Activated CD4-positive, alpha-beta T cell treated with anti-CD3 and anti-CD28 coated beads, Interleukin-2, amount 10 ng/mL, durations not matched to agents 24 days and 14 days (primary cell): ENCODE measurements at regions of chr10 and their contacts with region 1.

Region 1: DNA sequence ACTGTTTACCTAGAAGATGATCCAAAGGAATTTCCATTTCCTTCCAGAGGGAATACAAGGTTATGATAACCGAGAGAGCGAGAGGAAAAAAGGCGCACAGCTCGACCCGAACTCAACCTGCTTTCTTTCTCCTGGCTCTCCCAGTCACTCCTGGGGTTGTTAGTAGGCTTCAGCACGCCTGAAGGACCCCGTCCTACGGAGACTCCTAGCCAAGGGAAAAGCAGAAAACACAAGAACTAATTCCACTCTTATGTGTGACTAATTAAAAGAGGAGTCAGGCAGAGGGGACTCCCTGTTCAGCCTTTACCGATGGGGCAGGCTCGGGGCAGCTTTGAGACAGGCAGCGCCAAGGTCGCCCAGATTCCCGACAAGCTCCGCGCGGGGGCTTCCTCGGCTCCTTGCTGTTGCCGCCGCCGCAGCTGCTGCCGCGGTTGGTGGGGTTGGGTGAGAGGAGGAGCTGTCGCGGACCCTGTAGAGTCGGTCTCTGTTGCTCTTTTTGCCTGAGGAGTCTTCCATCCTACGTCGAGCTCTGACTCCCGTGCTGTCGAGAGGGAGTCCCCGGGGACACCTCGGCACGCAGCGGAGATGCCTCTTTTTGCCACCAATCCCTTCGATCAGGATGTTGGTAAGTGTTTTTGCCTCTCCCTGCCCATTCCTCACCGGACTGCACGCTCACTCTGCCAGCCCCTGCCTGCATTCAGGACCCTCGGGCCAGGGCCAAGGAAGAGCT is at the start of gene STAM:
- DNase-seq: peak; percentile 97
- H3K4me3 Mint-ChIP-seq: peak within 1 kb of the TSS; percentile 96
- H3K27ac Mint-ChIP-seq: peak within 1 kb of the TSS; percentile 100
- H3K4me1 Mint-ChIP-seq: peaks cover 44% of the 10 kb centered on the region
- H3K27me3 Mint-ChIP-seq: no peaks in the 10 kb centered on the region
- total RNA-seq, gene STAM: 22.2 and 25.0 TPM in 2 replicates

Region 2: GRCh38 chr10:17029581-17030271 is 614.2 kb before region 1 on chr10:
- intact Hi-C with region 1: loop called (anchors 5 kb)
- DNase-seq: peak; percentile 92
- H3K4me3 Mint-ChIP-seq: peak overlapping the region; percentile 80
- H3K27ac Mint-ChIP-seq: peak overlapping the region; percentile 90
- H3K4me1 Mint-ChIP-seq: peaks cover 63% of the 10 kb centered on the region
- H3K27me3 Mint-ChIP-seq: peaks cover 2% of the 10 kb centered on the region

Region 3: GRCh38 chr10:17617031-17617911 is 26.6 kb before region 1 on chr10 and contains the start of gene HACD1:
- intact Hi-C with region 1: loop called (anchors 1 kb)
- DNase-seq: peak; percentile 85
- H3K4me3 Mint-ChIP-seq: peak within 1 kb of the TSS; percentile 88
- H3K27ac Mint-ChIP-seq: peak within 1 kb of the TSS; percentile 48
- H3K4me1 Mint-ChIP-seq: peaks cover 6% of the 10 kb centered on the region
- H3K27me3 Mint-ChIP-seq: peaks cover 29% of the 10 kb centered on the region
- total RNA-seq, gene HACD1: 1.1 and 1.2 TPM in 2 replicates

Region 4: DNA sequence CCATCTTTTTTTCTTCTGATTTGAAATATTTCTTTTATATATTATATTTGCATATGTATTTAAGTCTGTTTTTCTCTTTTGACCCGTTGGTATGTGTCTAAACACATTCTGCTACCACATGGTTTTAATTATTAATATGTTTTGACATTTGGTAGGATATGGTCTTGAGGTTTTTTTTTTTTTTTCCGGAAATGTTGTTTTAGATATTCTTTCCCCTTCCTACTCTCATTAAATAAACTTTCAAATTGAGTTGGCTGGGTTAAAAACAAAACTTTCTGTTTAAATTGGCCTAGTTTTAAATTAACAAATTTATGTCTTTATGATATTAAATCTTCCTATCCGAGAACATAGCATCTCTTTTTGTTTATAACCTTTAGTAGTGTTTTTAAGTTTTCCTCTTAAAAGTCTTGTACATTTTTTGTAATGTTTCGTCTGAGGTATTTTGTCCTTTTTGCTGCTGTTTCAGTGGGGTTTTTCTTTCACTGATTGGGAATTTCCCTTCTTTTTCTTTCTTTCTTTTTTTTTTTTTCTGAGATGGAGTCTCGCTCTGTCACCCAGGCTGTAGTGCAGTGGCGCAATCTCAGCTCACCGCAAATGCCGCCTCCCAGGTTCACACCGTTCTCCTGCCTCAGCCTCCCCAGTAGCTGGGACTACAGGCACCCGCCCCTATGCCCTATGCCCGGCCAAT is 25.4 kb after region 1 on chr10:
- intact Hi-C with region 1: loop called (anchors 1 kb)
- DNase-seq: no peak
- H3K4me3 Mint-ChIP-seq: peak overlapping the region; percentile 70
- H3K27ac Mint-ChIP-seq: peak overlapping the region; percentile 86
- H3K4me1 Mint-ChIP-seq: peaks cover 38% of the 10 kb centered on the region
- H3K27me3 Mint-ChIP-seq: no peaks in the 10 kb centered on the region

Region 5: GRCh38 chr10:17703706-17704105 is 59.8 kb after region 1 on chr10:
- intact Hi-C with region 1: loop called (anchors 5 kb)
- DNase-seq: no peak
- H3K4me3 Mint-ChIP-seq: no peak overlapping the region
- H3K27ac Mint-ChIP-seq: no peak overlapping the region
- H3K4me1 Mint-ChIP-seq: no peaks in the 10 kb centered on the region
- H3K27me3 Mint-ChIP-seq: no peaks in the 10 kb centered on the region

Region 6: DNA sequence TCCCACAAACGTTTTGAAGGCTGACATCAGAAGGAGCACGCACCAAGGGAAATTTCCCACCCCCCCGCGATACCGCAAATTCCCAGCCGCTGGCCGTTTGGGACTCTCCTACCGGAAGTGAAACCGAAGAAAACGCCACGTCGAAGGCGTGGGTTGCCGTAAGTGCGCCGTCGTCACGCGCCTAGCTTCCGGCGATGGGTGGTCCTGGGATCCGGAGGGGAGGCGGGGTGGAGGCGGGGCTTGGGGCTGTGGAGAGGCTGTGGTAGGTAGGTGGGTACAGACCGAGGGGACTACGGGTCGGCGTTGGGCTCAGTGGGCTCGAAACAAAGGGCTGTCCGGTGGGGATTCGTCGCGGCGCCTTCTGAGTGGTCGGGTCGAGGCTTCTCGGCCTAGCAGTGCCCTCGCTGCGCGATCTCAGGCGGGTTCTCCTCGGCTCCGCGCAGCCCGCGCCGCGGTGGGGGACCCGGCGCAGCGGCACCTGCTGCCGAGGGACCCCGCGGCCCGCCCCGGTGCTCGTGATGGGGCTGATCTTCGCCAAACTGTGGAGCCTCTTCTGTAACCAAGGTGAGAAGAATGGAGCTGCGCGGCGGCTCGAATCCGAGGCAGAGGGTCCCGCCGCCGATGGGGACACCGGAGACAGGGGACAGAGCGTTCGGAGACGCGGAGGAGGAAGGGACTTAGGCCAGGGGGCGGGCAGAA is 1015.3 kb after region 1 on chr10 and contains the start of gene ARL5B:
- intact Hi-C with region 1: loop called (anchors 10 kb)
- DNase-seq: peak; percentile 98
- H3K4me3 Mint-ChIP-seq: peak within 1 kb of the TSS; percentile 96
- H3K27ac Mint-ChIP-seq: peak within 1 kb of the TSS; percentile 97
- H3K4me1 Mint-ChIP-seq: peaks cover 35% of the 10 kb centered on the region
- H3K27me3 Mint-ChIP-seq: no peaks in the 10 kb centered on the region
- total RNA-seq, gene ARL5B: 17.0 and 17.5 TPM in 2 replicates